Activated T-helper 1 cell treated with anti-CD3 and anti-CD28 coated beads, Interleukin-12 subunit alpha, Interleukin-12 subunit beta, Interleukin-2, Interleukin-4 antibody, amounts not matched to agents 30 ng/mL and 10 ng/mL and 1 ng/mL, durations not matched to agents 14 hours and 24 hours and 36 hours (primary cell): ENCODE measurements at regions of chr3 and their contacts with region 1.

Region 1: DNA sequence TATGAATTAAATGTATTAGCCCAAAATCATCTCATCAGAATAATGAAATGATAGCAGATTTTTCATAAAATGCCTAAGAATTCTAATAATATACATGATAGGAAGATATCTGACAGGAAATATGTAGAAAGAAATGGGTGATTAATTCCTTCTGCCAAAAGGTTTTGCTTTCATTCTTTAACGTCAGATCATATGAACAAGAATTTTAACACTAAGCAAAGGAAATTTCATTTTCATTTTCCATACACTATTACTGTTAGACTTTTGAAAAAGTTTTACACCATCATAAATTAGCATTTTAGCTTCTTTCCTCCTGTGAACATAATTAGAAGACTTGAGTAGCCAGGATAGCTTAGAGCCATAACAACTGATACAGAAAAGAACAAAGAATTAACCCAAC is 1099.9 kb downstream of the NSUN3 start:
- DNase-seq: no peak
- H3K4me3 Mint-ChIP-seq: no peak overlapping the region
- H3K27ac Mint-ChIP-seq: no peak overlapping the region
- H3K4me1 Mint-ChIP-seq: no peaks in the 10 kb centered on the region
- H3K27me3 Mint-ChIP-seq: no peaks in the 10 kb centered on the region

Region 2: GRCh38 chr3:94961446-94962080 is 201.2 kb before region 1 on chr3:
- intact Hi-C with region 1: no loop called
- DNase-seq: no peak
- H3K4me3 Mint-ChIP-seq: no peak overlapping the region
- H3K27ac Mint-ChIP-seq: no peak overlapping the region
- H3K4me1 Mint-ChIP-seq: no peaks in the 10 kb centered on the region
- H3K27me3 Mint-ChIP-seq: no peaks in the 10 kb centered on the region

Region 3: GRCh38 chr3:95197616-95198015 is 34.8 kb after region 1 on chr3:
- intact Hi-C with region 1: loop called (anchors 1 kb)
- DNase-seq: no peak
- H3K4me3 Mint-ChIP-seq: no peak overlapping the region
- H3K27ac Mint-ChIP-seq: no peak overlapping the region
- H3K4me1 Mint-ChIP-seq: no peaks in the 10 kb centered on the region
- H3K27me3 Mint-ChIP-seq: no peaks in the 10 kb centered on the region

Region 4: GRCh38 chr3:95356764-95357501 is 194.1 kb after region 1 on chr3:
- intact Hi-C with region 1: no loop called
- DNase-seq: no peak
- H3K4me3 Mint-ChIP-seq: no peak overlapping the region
- H3K27ac Mint-ChIP-seq: no peak overlapping the region
- H3K4me1 Mint-ChIP-seq: no peaks in the 10 kb centered on the region
- H3K27me3 Mint-ChIP-seq: no peaks in the 10 kb centered on the region